Heart left ventricle (tissue), 16 donors: ENCODE measurements at regions of chr6 and their contacts with region 1.

Region 1: DNA sequence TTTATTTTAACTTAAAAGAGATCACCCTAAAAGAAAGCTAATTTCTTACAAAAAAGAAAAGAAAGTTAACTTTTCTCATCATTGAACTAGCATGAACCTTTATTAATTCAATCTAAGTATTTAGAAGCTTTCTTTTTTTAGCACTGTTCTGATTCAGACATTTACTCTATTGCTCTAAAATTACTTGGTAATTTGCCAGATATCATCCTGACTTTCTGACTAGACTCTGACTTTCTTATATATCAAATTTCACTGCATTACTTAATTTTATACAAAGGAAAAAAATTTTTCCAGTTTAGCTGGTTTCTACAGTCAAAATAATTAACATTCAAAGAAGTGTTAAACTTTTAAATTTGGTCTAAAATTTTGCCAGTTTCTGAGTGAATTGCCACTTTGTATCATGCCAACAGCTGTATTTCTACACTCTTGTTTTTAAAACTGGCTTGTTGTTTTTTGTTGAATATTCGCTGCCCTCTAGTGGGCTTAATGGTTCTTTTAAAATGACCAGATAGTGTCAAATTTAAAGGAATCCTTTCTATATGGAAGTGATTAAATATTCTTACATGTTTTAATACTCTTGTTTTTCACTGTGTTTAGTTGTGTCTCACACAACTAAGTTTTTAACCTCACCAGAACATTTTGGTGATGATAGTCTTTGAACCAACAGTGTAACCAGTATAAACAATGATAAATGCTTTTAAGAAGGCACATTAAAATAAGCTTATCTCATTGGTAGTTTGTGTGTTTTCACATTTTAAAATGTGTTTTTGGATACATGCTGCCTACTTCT is 102.0 kb downstream of the POPDC3 start:
- DNase-seq: no peak
- ATAC-seq: no peak
- H3K4me3 ChIP-seq: no peak overlapping the region
- H3K27ac ChIP-seq: no peak overlapping the region
- H3K4me1 ChIP-seq: peaks cover 0 to 2% (median 0%) of the 10 kb centered on the region in 12 donors
- H3K27me3 ChIP-seq: peaks cover 0 to 8% (median 0%) of the 10 kb centered on the region in 9 donors
- CTCF ChIP-seq: peak; percentile 21 to 59 (median 45)
- POLR2A ChIP-seq: no peak

Region 2: DNA sequence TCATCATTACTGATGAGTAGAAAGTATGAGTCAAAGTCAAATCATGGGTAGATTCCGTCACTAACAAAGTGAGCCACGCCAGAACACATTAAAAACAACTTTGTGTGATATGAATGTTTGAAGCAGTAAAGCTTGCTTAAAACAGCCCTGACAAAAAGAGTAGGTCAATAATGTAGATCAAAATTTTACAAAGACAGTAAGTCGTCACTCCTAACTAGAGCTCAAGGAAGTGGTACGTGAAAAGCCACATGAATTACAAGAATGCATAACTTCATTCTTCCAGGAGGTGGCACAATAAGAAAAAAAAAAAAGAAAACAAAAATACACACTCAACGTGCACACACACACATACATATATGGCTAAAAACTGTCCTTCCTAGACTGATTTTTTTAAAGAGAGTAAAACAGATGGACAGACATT is 288.0 kb before region 1 on chr6:
- intact Hi-C with region 1: loop called in 4 of 10 experiments (anchors 5 to 10 kb)
- DNase-seq: no peak
- ATAC-seq: no peak
- H3K4me3 ChIP-seq: no peak overlapping the region
- H3K27ac ChIP-seq: no peak overlapping the region
- H3K4me1 ChIP-seq: peaks cover 0 to 18% (median 0%) of the 10 kb centered on the region in 12 donors
- H3K27me3 ChIP-seq: no peaks in the 10 kb centered on the region
- CTCF ChIP-seq: peak in 9 of 12 donors; percentile 12 to 41 (median 33)
- POLR2A ChIP-seq: no peak

Region 3: GRCh38 chr6:104940881-104941728 is 136.7 kb before region 1 on chr6:
- intact Hi-C with region 1: loop called in 5 of 10 experiments (anchors 1 to 10 kb)
- DNase-seq: peak in 1 of 5 donors; percentile 13
- ATAC-seq: peak in 3 of 4 donors; percentile 55 to 80 (median 64)
- H3K4me3 ChIP-seq: peak overlapping the region in 11 of 12 donors; percentile 20 to 49 (median 30)
- H3K27ac ChIP-seq: no peak overlapping the region
- H3K4me1 ChIP-seq: peaks cover 0 to 17% (median 2%) of the 10 kb centered on the region in 12 donors
- H3K27me3 ChIP-seq: peaks cover 24 to 93% (median 65%) of the 10 kb centered on the region in 9 donors
- CTCF ChIP-seq: peak; percentile 22 to 66 (median 40)
- POLR2A ChIP-seq: no peak

Region 4: DNA sequence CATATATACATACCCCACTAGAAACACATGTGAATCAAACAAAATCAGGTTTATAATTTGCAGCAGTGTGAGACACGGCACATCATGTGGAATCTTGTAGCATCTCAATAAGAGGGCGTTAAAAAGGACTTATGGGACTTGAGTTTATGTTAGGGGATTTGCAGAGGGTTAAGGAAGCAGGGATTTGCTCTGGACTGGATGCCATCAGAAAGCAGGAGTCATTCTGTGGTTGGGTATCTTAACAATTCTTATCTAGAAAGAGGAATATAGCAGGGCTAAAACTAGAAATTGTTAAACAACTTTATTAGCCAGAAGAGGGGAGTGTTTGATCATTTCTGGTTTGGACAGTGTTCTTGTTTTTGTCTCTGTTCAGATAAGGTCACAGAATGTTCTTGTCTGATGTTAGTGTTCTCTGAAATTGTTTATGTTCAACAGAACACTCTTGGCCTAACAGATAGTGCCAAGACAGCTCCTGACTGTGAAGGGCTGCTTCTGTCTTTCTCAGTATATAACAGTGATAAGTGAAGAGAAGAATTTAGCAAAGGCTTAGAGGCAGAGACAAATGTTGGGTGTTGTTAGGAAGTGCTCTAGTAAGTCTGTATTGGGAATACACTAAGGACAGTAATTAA is 81.7 kb before region 1 on chr6:
- intact Hi-C with region 1: loop called in 2 of 10 experiments (anchors 5 to 10 kb)
- DNase-seq: no peak
- ATAC-seq: peak in 3 of 4 donors; percentile 38 to 83 (median 41)
- H3K4me3 ChIP-seq: no peak overlapping the region
- H3K27ac ChIP-seq: peak overlapping the region in 1 of 12 donors; percentile 52
- H3K4me1 ChIP-seq: peaks cover 0 to 2% (median 0%) of the 10 kb centered on the region in 12 donors
- H3K27me3 ChIP-seq: no peaks in the 10 kb centered on the region
- CTCF ChIP-seq: peak in 1 of 12 donors; percentile 8
- POLR2A ChIP-seq: no peak